Prostate gland (tissue), 2 donors: ENCODE measurements at regions of chr6 and their contacts with region 1.

Region 1: GRCh38 chr6:35342258-35343091 is at the start of gene PPARD:
- DNase-seq: peak; percentile 98
- H3K4me3 ChIP-seq: peak within 1 kb of the TSS; percentile 77 to 96
- H3K27ac ChIP-seq: peak within 1 kb of the TSS; percentile 93 to 95
- H3K4me1 ChIP-seq: no peaks in the 10 kb centered on the region
- H3K27me3 ChIP-seq: no peaks in the 10 kb centered on the region
- CTCF ChIP-seq: peak; percentile 98 to 100 (median 100)
- POLR2A ChIP-seq: peak; percentile 98
- total RNA-seq, gene PPARD: 21.2 to 24.1 TPM

Region 2: GRCh38 chr6:34260576-34261267 is 1081.8 kb before region 1 on chr6:
- intact Hi-C with region 1: no loop called
- DNase-seq: no peak
- H3K4me3 ChIP-seq: no peak overlapping the region
- H3K27ac ChIP-seq: no peak overlapping the region
- H3K4me1 ChIP-seq: no peaks in the 10 kb centered on the region
- H3K27me3 ChIP-seq: no peaks in the 10 kb centered on the region
- CTCF ChIP-seq: no peak
- POLR2A ChIP-seq: no peak

Region 3: DNA sequence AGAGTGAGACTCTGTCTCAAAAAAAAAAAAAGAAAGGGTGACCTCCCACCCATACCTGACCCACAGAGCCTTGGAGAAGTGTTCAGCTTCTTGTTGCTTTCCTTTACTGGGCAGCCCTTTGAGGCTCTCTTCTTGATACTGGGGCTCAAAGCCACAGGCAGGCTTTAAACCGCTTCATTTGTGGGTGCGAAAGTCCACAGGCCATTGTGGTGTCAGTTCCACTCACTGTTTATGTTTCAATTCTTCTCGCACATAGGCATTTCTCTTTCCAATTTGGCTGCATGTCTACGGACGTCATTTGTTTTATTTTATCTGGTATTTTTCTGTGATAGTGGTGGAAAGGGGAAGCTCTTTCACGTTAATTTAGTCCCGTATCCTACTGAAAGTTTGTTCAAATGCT is 34.5 kb after region 1 on chr6:
- intact Hi-C with region 1: no loop called
- DNase-seq: no peak
- H3K4me3 ChIP-seq: no peak overlapping the region
- H3K27ac ChIP-seq: no peak overlapping the region
- H3K4me1 ChIP-seq: no peaks in the 10 kb centered on the region
- H3K27me3 ChIP-seq: no peaks in the 10 kb centered on the region
- CTCF ChIP-seq: no peak
- POLR2A ChIP-seq: no peak

Region 4: DNA sequence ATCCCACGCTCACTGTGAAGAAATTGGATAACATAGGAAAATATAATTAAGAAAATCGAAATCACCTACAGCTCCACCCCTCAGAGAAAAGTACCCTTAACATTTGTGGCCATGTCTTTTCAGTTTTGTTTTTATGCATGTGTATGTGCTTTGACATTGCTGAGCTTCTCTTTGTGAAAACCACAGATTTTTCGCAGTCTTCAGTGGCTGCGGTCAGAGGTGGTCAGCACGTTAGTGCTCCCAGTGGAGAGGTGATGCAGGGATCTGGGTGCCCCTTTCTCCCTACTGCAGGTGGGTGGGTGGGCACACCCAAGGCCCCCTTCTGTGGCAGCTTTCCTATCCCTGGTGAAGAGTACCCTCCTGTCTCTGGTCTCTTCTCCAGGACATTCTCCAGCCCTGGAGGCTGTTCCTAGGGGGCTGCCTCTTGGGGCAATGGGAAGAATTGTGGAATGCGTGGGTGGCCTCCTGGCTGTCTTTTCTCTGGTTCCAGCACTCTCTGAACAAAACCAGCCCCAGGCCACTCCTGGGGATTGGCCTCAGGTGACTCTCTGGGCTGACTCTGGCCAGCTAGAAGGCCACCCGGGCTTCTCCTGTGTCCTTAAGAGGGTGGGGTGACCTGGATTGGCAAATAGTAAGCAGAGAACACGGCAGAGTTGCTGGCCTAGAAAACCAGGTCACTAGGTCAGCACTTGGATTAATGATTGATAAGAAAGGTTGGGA is 59.8 kb after region 1 on chr6:
- intact Hi-C with region 1: no loop called
- DNase-seq: no peak
- H3K4me3 ChIP-seq: no peak overlapping the region
- H3K27ac ChIP-seq: no peak overlapping the region
- H3K4me1 ChIP-seq: no peaks in the 10 kb centered on the region
- H3K27me3 ChIP-seq: no peaks in the 10 kb centered on the region
- CTCF ChIP-seq: no peak
- POLR2A ChIP-seq: no peak

Region 5: DNA sequence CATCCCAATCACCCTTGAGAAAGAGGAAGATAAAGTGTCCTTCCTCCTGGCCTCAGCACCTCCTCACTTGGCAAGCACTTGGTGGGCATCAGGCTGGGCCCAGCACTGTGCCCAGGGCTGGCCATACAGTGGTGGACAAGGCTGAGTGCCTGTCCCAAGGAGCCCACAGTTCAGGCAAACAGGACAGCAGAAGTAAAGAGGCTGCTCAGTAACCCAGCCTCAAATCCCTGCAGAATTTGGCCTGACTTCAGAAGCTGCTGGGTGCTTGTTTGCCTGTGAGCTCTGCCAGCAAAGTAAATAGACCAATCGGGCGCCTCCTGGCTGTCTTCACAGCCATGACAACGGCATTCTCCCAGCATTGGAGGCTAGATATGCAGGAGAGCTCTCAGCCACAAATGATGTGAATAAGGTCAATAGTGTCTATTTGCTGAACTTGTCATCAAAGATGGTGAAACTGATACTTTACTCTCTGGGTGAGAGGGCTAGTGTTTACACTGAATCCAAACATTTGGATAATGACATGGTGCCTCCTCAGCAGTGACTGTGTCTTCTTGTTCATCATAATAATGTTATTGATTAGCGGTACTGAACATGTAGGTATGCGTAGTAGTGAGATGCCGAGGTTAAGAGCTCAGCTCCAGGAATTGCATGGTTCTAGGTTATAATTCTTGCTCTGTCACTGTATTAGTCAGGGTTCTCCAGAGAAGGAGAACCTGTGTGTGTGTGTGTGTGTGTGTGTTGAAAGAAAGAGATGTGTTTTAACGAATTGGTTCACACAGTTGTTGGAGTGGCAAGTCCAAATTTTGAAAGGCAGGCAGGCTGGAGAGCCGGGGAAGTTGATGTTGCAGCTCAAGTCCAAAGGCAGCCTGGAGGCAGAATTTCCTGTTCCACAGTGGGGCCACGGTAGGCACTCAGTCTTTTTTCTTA is 72.9 kb after region 1 on chr6:
- intact Hi-C with region 1: loop called (anchors 2 kb)
- DNase-seq: peak; percentile 88
- H3K4me3 ChIP-seq: no peak overlapping the region
- H3K27ac ChIP-seq: no peak overlapping the region
- H3K4me1 ChIP-seq: peaks cover 5% of the 10 kb centered on the region
- H3K27me3 ChIP-seq: no peaks in the 10 kb centered on the region
- CTCF ChIP-seq: peak; percentile 53 to 93 (median 78)
- POLR2A ChIP-seq: no peak

Region 6: GRCh38 chr6:35452186-35453090 is 110.0 kb after region 1 on chr6 and contains the start of gene FANCE:
- intact Hi-C with region 1: loop called (anchors 1 kb)
- DNase-seq: peak; percentile 94
- H3K4me3 ChIP-seq: peak within 1 kb of the TSS; percentile 49 to 64
- H3K27ac ChIP-seq: peak within 1 kb of the TSS; percentile 76 to 78
- H3K4me1 ChIP-seq: no peaks in the 10 kb centered on the region
- H3K27me3 ChIP-seq: no peaks in the 10 kb centered on the region
- CTCF ChIP-seq: peak in 1 of 4 experiments; percentile 23
- POLR2A ChIP-seq: peak; percentile 86
- total RNA-seq, gene FANCE: 7.5 to 14.0 TPM

Region 7: GRCh38 chr6:35468181-35468979 is 125.9 kb after region 1 on chr6 and contains the start of gene RPL10A:
- intact Hi-C with region 1: loop called (anchors 1 kb)
- DNase-seq: peak; percentile 97
- H3K4me3 ChIP-seq: peak within 1 kb of the TSS; percentile 77 to 81
- H3K27ac ChIP-seq: peak within 1 kb of the TSS; percentile 90 to 93
- H3K4me1 ChIP-seq: no peaks in the 10 kb centered on the region
- H3K27me3 ChIP-seq: no peaks in the 10 kb centered on the region
- CTCF ChIP-seq: peak; percentile 94 to 100 (median 97)
- POLR2A ChIP-seq: peak; percentile 94
- total RNA-seq, gene RPL10A: 897 to 2,172 TPM

Region 8: GRCh38 chr6:35731736-35732532 is 389.5 kb after region 1 on chr6:
- intact Hi-C with region 1: loop called (anchors 10 kb)
- DNase-seq: peak; percentile 98
- H3K4me3 ChIP-seq: peak overlapping the region; percentile 46 to 50
- H3K27ac ChIP-seq: peak overlapping the region; percentile 99 to 100
- H3K4me1 ChIP-seq: peaks cover 58% of the 10 kb centered on the region
- H3K27me3 ChIP-seq: no peaks in the 10 kb centered on the region
- CTCF ChIP-seq: peak in 1 of 4 experiments; percentile 10
- POLR2A ChIP-seq: peak; percentile 59